ENCODE measurements at regions of chr2 and their contacts with region 1.

Region 1: GRCh38 chr2:213151437-213152064 is at the start of gene IKZF2:
- DNase-seq: peak; percentile 95 to 98 (median 97)
- H3K4me3 ChIP-seq: peak within 1 kb of the TSS; percentile 81 to 99 (median 95)
- H3K27ac ChIP-seq: peak within 1 kb of the TSS; percentile 72 to 87
- H3K4me1 ChIP-seq: peaks cover 13 to 39% (median 26%) of the 10 kb centered on the region in 4 experiments
- H3K27me3 ChIP-seq: no peaks in the 10 kb centered on the region

Region 2: DNA sequence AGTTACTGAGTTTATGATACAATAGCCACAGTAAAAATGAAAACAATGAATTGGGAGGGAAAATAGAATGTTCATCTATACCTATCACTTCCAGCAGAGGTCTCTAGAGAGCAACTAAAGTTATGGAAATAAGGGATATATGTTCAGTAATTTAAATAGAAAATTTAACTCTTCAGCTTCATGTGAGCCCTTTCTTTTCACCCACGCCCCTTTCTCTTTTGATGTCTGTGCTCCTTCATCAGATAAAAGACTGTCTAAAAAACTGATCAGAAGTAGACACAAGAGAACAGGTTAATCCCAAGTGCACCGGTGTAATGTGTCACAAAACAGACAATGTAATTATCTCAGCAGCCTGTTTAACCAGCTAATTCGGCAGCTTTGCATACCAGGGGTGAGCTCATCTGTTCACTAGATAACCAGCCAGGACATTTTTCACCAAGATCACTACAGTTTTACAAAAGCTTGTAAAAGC is 374.5 kb before region 1 on chr2:
- CTCF ChIA-PET with region 1: interaction called, 107 read pairs
- POLR2A ChIA-PET with region 1: interaction called, 3 read pairs
- DNase-seq: peak; percentile 37 to 65 (median 56)
- H3K4me3 ChIP-seq: no peak overlapping the region
- H3K27ac ChIP-seq: no peak overlapping the region
- H3K4me1 ChIP-seq: peaks cover 0 to 5% (median 1%) of the 10 kb centered on the region in 4 experiments
- H3K27me3 ChIP-seq: no peaks in the 10 kb centered on the region

Region 3: DNA sequence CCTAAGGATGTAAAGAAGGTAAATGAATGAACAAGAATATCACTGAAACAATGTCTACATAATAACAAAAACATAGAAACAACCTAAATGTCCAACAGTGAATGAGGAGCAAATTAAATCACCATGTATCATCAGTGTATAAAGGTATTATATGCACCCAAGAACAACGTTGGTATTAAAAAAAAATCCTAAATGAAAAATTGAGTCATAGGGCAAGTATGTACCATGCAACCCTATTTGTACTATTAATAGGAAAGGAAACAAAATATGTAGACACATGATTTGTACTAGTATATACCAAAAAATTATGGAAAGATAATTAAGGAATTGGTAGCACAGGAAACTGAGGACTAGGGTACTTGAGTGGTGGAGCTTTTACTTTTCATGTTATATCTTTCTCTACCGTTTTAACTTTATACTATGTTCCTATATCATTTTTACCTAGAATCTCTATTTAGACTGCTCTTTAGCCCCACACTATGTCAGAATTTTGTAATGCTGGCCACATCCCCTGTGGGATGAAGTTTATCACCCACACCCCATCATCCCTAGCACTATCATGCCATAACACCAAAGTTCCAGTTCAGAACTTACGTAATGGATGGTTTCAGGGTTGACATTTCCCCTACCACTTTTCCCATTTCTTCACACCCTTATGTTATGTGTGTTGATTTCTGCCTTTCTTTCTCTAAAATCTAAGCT is 25.8 kb before region 1 on chr2:
- CTCF ChIA-PET with region 1: interaction called, 10 read pairs
- POLR2A ChIA-PET with region 1: no interaction called
- DNase-seq: peak in 2 of 3 donors; percentile 35 to 49
- H3K4me3 ChIP-seq: no peak overlapping the region
- H3K27ac ChIP-seq: no peak overlapping the region
- H3K4me1 ChIP-seq: peaks cover 9 to 35% (median 15%) of the 10 kb centered on the region in 4 experiments
- H3K27me3 ChIP-seq: no peaks in the 10 kb centered on the region

Region 4: GRCh38 chr2:213189001-213189899 is 37.7 kb after region 1 on chr2:
- CTCF ChIA-PET with region 1: no interaction called
- POLR2A ChIA-PET with region 1: no interaction called
- DNase-seq: no peak
- H3K4me3 ChIP-seq: no peak overlapping the region
- H3K27ac ChIP-seq: no peak overlapping the region
- H3K4me1 ChIP-seq: no peaks in the 10 kb centered on the region
- H3K27me3 ChIP-seq: no peaks in the 10 kb centered on the region

Region 5: DNA sequence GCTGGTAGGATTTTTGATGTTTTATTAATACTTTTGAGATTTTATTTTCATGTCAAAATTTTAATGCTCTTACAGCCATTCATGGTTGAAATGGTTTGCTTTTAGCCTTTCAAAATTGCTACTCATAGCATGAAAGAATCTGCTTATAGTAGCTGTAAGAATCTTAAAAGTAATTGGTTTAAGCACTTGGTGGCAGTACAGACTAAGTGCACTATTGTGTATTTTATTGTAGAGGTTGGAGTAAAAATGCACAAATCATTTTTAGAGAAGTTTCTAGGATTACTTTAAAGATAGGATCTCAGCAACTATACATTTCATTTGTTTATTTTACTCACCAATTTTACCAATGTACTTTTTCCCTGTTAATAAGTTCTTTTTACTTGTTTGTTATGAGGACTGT is 338.5 kb after region 1 on chr2:
- CTCF ChIA-PET with region 1: no interaction called
- POLR2A ChIA-PET with region 1: no interaction called
- DNase-seq: peak in 2 of 3 donors; percentile 20 to 25
- H3K4me3 ChIP-seq: no peak overlapping the region
- H3K27ac ChIP-seq: no peak overlapping the region
- H3K4me1 ChIP-seq: no peaks in the 10 kb centered on the region
- H3K27me3 ChIP-seq: no peaks in the 10 kb centered on the region